Activated naive CD4-positive, alpha-beta T cell treated with anti-CD3 and anti-CD28 coated beads for 36 hours (primary cell): ENCODE measurements at regions of chr16 and their contacts with region 1.

Region 1: DNA sequence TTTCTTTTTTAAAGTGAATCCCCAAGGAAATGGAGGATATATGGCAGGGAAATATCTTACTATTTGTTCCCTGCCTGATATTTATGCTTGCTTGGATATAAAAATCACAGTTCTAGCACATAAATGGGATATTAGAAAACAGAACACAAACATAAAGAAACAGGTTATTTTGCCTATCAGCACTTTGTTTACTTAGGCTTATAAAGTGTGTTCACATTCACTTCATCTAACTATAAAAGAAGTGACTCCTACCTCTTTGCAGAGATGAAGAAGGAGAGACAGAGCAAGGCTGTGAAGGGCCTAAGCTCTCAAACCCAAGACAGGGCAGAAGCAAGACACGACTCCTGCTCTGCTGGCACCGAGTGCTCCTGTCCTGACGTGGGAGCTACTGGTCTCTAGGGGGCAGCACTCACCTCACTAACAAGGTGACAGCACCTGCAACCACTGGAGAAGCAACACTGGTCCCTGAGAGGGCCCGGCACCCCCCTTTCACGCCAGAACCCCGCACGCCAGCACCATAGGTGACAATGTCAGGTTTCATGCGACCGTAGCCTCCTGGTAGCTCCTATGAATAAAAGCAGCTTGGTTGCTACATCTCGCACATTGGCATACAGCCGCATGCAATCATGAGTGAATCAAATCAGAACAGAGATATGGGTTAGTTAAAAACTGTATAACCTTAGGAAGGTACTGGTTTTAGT is 32.0 kb downstream of the MBTPS1 start:
- DNase-seq: peak; percentile 86
- H3K4me3 Mint-ChIP-seq: no peak overlapping the region
- H3K27ac Mint-ChIP-seq: no peak overlapping the region
- H3K4me1 Mint-ChIP-seq: peaks cover 32% of the 10 kb centered on the region
- H3K27me3 Mint-ChIP-seq: no peaks in the 10 kb centered on the region

Region 2: DNA sequence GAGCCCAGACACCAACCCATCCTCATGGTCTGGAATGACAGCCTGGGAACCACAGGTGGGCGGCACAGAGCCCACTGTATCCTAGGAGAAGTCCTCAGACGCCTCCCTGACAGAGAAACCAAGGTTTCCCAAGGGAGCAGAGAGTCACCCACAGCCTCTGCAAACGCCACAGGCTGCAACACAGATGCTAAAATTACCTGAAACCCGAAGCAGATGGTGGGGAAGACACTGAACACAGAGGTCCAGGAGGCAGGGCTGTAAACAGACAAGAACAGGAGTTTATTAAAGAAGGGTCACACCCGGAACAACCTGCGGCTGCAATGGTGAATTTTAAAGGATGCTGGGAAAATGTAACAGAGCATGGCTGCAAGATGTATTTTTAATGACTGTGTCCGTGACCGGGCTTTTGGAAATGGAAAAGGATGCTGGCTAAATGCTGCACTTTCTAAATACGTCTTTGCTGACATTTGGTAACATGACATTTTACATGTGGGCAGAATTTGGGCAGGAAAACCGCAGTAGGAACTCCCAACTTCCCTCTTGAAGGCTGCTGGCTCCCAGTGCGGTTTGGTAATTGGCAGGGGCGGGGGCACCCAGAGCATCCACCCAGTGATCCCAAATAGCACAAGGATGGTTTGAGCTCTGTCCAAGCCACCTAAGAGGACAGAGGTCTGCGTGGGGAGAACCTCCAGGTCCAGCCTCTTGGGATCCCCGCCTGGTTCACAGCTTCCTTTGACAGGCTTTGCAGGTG is 55.2 kb before region 1 on chr16:
- CTCF ChIA-PET with region 1: no interaction called
- intact Hi-C with region 1: no loop called
- DNase-seq: no peak
- H3K4me3 Mint-ChIP-seq: no peak overlapping the region
- H3K27ac Mint-ChIP-seq: no peak overlapping the region
- H3K4me1 Mint-ChIP-seq: peaks cover 9% of the 10 kb centered on the region
- H3K27me3 Mint-ChIP-seq: peaks cover 7% of the 10 kb centered on the region

Region 3: DNA sequence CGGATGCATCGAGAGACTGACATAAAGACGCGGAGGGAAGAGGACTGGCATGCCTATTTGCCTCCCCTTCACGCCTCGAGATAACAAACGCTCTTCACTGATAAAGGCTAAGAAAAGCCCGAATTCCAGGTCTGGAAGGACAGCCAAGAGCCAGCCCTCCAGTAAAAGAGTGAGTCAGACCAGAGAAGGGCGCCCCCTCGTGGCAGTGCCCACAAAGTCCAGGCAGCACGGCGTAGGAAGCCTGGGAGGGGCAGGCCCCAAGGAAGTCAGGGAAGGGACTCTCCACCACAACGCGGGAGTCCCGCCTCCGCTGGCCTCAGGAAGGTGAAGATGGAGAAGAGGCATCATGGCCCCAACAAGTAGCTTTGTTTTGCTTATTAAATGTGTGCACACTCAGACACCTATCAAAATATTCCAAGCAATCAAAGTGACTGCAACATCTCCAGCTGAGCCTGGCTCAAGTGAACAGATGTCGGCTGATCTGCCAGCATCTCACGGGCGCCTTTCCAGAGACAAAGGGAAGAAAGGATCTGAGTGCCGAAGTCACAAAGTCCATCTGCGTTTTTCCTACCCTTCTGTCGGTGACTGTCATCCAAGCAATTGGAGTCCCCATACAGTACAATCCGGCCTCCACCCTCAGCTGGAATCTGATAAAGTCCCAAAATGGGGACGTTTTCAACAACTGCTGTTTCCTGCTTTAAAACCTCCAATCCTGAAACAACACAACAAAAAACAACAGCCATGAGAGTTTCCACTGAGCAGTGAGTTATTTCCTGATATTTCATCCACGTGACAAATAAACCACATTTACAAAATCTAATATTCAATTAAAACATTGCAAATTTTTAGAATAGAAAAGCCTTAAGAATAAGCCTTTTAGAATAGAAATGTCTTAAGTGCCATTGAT is 21.7 kb before region 1 on chr16:
- CTCF ChIA-PET with region 1: interaction called, 42 read pairs
- intact Hi-C with region 1: no loop called
- DNase-seq: peak; percentile 85
- H3K4me3 Mint-ChIP-seq: no peak overlapping the region
- H3K27ac Mint-ChIP-seq: peak overlapping the region; percentile 13
- H3K4me1 Mint-ChIP-seq: peaks cover 6% of the 10 kb centered on the region
- H3K27me3 Mint-ChIP-seq: no peaks in the 10 kb centered on the region

Region 4: GRCh38 chr16:84105301-84105815 is 20.6 kb after region 1 on chr16:
- CTCF ChIA-PET with region 1: interaction called, 12 read pairs
- intact Hi-C with region 1: no loop called
- DNase-seq: no peak
- H3K4me3 Mint-ChIP-seq: no peak overlapping the region
- H3K27ac Mint-ChIP-seq: no peak overlapping the region
- H3K4me1 Mint-ChIP-seq: peaks cover 44% of the 10 kb centered on the region
- H3K27me3 Mint-ChIP-seq: no peaks in the 10 kb centered on the region

Region 5: DNA sequence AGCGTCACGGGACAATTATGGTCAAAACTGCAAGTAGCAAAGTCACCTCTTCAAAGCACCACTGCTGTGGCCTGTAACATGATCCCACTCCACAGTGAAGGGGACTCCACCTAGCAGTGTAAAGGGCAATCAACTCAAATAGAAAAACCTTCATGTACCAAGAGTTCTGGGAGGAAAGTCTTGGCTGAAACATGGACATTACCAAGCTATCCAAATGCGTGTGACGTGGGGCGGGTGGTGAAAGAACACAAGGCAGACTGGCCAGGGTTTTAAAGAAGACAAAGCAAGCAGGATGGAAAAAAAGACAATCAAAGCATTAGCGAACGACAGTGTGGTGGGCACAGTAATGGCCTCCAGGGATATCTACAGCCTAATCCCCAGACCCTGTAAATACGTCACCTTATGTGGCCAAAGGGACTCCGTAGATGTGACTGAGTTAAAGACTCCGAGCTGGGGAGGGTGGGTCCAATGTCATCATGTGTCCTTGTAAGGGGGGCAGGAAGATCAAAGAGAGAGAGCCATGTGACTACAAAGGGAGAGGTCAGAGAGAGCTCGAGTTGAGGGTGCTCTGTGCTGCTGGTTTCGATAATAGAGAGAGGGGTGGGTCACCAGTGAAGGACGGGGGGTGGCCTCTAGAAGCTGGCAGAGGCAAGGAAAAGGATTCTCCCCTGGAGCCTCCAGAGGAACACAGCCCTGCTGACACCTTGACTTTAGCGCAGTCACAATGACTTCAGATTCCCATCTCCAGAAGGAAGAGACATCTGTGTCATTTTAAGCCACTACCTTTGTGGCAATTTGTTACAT is 54.3 kb after region 1 on chr16:
- CTCF ChIA-PET with region 1: interaction called, 10 read pairs
- intact Hi-C with region 1: no loop called
- DNase-seq: peak; percentile 65
- H3K4me3 Mint-ChIP-seq: no peak overlapping the region
- H3K27ac Mint-ChIP-seq: no peak overlapping the region
- H3K4me1 Mint-ChIP-seq: peaks cover 41% of the 10 kb centered on the region
- H3K27me3 Mint-ChIP-seq: no peaks in the 10 kb centered on the region

Region 6: GRCh38 chr16:84175350-84176081 is 90.8 kb after region 1 on chr16:
- CTCF ChIA-PET with region 1: interaction called, 138 read pairs
- intact Hi-C with region 1: loop called (anchors 1 kb)
- DNase-seq: peak; percentile 83
- H3K4me3 Mint-ChIP-seq: no peak overlapping the region
- H3K27ac Mint-ChIP-seq: no peak overlapping the region
- H3K4me1 Mint-ChIP-seq: peaks cover 17% of the 10 kb centered on the region
- H3K27me3 Mint-ChIP-seq: no peaks in the 10 kb centered on the region